WTC11 (cell line): ENCODE measurements at regions of chr15 and their contacts with region 1.

Region 1: GRCh38 chr15:89893696-89894455 is at the start of gene AP3S2:
- DNase-seq: peak; percentile 87
- ATAC-seq: peak; percentile 77
- H3K4me3 Mint-ChIP-seq: peak within 1 kb of the TSS; percentile 99
- H3K27ac Mint-ChIP-seq: peak within 1 kb of the TSS; percentile 99
- H3K4me1 Mint-ChIP-seq: peaks cover 19% of the 10 kb centered on the region
- H3K27me3 Mint-ChIP-seq: no peaks in the 10 kb centered on the region
- CTCF ChIP-seq: no peak
- total RNA-seq, gene AP3S2: 35.7 to 40.0 TPM (median 36.7 TPM) in 3 replicates

Region 2: DNA sequence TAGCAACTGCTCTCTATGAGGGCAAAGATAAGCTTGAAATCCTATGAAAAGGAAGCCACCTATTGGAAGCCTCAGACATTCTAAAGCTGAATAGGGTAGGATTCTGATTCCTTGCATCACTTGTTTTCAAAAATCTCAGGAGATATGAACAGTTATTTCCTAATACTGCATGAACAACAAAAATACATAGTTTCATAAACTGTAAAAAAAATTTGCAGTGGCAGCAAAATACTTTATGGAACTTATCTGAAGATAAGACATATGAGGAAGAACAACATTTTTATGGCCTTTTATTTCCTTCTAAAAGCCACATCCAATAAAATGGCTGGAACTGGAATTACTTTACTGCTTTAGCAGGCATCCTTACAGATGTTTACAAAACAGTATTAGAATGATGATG is 30.0 kb before region 1 on chr15:
- CTCF ChIA-PET with region 1: no interaction called
- POLR2A ChIA-PET with region 1: no interaction called
- DNase-seq: no peak
- ATAC-seq: no peak
- H3K4me3 Mint-ChIP-seq: no peak overlapping the region
- H3K27ac Mint-ChIP-seq: no peak overlapping the region
- H3K4me1 Mint-ChIP-seq: no peaks in the 10 kb centered on the region
- H3K27me3 Mint-ChIP-seq: no peaks in the 10 kb centered on the region
- CTCF ChIP-seq: no peak

Region 3: DNA sequence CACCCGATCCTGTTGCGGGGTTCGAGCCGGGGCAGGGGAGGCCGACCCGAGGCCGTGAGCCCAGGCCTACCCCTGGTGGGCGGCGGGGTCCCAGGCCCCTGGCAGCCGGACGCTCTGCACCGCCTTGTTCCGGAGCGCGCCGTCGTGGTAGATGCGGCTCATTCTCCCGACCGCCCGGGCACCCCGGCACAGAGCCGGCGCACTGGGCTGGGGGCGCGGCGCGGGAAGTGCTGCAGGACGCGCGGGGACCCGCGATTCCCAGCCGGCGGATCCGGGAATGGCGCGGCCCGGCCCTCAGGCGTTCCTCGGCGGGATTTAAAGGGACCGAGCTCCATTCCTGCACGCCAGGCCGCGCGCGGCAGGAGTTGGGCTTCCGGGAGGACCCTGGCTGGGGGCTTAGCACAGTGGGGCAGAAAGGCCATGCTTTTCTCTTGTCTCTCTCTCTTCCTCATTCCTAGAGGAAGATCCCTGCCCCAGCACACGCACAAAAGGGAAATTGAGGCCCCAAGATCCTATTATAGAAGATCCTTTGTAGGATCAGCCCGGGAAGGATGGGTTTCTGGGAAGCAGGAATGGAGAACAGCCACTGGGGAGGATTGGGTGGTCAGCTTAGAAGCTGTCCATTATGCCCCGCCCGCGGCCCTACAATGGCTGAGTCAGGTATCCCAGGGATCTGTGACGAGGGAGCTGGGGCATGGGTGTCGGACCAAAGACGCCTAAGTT is 19.0 kb after region 1 on chr15 and contains the start of gene ARPIN:
- CTCF ChIA-PET with region 1: interaction called, 18 read pairs
- POLR2A ChIA-PET with region 1: interaction called, 3 read pairs
- DNase-seq: peak; percentile 72
- ATAC-seq: peak; percentile 80
- H3K4me3 Mint-ChIP-seq: peak within 1 kb of the TSS; percentile 72
- H3K27ac Mint-ChIP-seq: no peak within 1 kb of the TSS
- H3K4me1 Mint-ChIP-seq: peaks cover 12% of the 10 kb centered on the region
- H3K27me3 Mint-ChIP-seq: peaks cover 21% of the 10 kb centered on the region
- CTCF ChIP-seq: no peak
- total RNA-seq, gene ARPIN: 3.5 to 4.8 TPM (median 4.7 TPM) in 3 replicates

Region 4: GRCh38 chr15:90075420-90076289 is 181.8 kb after region 1 on chr15:
- CTCF ChIA-PET with region 1: interaction called, 12 read pairs
- POLR2A ChIA-PET with region 1: no interaction called
- DNase-seq: peak; percentile 46
- ATAC-seq: peak; percentile 61
- H3K4me3 Mint-ChIP-seq: peak overlapping the region; percentile 5; the same call in 1 of the 2 replicates
- H3K27ac Mint-ChIP-seq: peak overlapping the region; percentile 97
- H3K4me1 Mint-ChIP-seq: peaks cover 14% of the 10 kb centered on the region
- H3K27me3 Mint-ChIP-seq: no peaks in the 10 kb centered on the region
- CTCF ChIP-seq: no peak

Region 5: DNA sequence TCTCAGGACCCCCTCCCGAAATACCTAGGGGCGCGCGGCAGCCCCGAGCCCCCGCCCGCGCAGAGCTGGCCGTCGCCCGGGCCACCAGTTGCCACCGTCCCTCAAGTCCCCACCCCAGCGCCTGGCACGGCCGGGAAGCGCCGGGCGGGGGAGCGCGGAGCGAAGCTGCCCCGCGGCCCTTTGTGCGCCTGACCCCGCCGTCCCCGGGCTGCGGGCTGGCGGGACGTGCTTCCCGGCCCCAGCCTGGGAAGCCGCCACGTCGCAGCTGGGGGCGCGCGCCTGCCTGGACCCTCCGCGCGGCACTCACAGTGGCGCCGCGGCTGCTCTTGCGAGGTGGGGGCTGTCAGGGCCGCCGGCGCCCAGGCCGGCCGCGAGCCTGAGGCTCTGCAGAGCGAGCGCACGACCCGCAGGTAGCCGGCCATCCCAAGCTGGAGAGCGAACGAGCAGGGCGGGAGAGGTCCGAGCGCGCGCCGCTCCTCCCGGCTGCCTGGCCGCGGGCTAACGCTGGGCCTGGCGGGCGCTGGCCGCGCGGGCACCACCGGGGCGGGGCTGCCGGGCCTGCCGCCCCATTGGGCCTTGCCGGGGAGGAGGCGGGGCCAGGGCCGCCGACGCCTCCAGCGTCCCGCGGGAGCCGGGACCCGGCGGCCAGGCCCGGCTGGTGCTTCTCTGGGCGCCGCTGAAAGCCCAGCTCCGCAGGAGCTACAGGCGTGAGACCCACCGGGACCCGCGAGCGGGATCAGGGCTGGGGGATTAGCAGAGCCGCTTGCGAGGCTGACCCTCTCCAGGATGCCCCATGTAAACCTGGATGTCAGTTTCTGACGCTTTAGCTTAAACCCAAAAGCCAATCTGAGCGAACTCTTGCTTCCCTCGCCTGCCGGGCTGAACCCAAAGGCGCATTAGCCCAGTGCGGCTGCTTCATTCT is 208.4 kb after region 1 on chr15 and contains the start of gene IDH2:
- CTCF ChIA-PET with region 1: interaction called, 12 read pairs
- POLR2A ChIA-PET with region 1: interaction called, 3 read pairs
- DNase-seq: peak; percentile 82
- ATAC-seq: peak; percentile 91
- H3K4me3 Mint-ChIP-seq: peak within 1 kb of the TSS; percentile 79
- H3K27ac Mint-ChIP-seq: no peak within 1 kb of the TSS
- H3K4me1 Mint-ChIP-seq: peaks cover 42% of the 10 kb centered on the region
- H3K27me3 Mint-ChIP-seq: peaks cover 41% of the 10 kb centered on the region
- CTCF ChIP-seq: no peak
- total RNA-seq, gene IDH2: 53.3 to 80.3 TPM (median 72.3 TPM) in 3 replicates